Gastrocnemius medialis (tissue), 4 donors: ENCODE measurements at regions of chr9 and their contacts with region 1.

Region 1: DNA sequence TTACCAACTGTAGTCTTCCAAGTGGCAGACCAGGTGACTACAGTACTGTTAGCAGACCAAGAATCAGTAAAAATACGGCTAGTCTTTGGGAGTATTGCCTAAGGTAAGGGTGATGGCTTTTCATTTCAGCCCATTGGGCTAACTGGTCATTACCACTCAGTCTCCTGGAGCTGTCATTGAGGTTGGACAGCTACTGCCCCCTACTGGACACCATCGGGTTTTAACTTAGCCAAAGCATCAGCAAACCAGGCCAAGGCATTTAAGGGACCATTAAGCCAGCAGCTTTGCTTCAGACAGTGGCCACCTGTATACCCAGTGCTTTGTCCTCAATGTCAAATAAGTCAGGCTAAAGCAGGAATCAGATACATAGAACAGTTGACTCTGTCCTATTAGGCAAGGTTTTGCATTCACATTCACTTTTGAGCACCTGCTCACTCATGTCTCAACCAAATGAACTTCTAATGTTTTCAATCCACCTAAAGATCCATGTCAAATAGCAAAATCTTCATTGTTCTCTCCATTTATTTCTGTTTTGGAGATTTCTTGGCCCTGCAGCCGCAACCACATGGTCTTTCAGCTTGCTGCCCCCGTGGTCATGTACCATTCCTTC is 117.2 kb downstream of the INVS start:
- DNase-seq: peak in 1 of 2 donors; percentile 28
- ATAC-seq: peak in 1 of 2 donors; percentile 53
- H3K4me3 ChIP-seq: no peak overlapping the region
- H3K27ac ChIP-seq: no peak overlapping the region
- H3K4me1 ChIP-seq: peaks cover 0 to 4% of the 10 kb centered on the region in 2 donors
- H3K27me3 ChIP-seq: no peaks in the 10 kb centered on the region
- CTCF ChIP-seq: peak; percentile 40 to 70 (median 52)
- POLR2A ChIP-seq: no peak

Region 2: GRCh38 chr9:99173570-99174504 is 1042.4 kb before region 1 on chr9:
- in situ Hi-C with region 1: loop called in 1 of 4 experiments (anchors 25 kb)
- intact Hi-C with region 1: loop called (anchors 10 kb)
- DNase-seq: no peak
- ATAC-seq: no peak
- H3K4me3 ChIP-seq: no peak overlapping the region
- H3K27ac ChIP-seq: no peak overlapping the region
- H3K4me1 ChIP-seq: no peaks in the 10 kb centered on the region
- H3K27me3 ChIP-seq: peaks cover 0 to 4% (median 0%) of the 10 kb centered on the region in 3 donors
- CTCF ChIP-seq: no peak
- POLR2A ChIP-seq: no peak

Region 3: DNA sequence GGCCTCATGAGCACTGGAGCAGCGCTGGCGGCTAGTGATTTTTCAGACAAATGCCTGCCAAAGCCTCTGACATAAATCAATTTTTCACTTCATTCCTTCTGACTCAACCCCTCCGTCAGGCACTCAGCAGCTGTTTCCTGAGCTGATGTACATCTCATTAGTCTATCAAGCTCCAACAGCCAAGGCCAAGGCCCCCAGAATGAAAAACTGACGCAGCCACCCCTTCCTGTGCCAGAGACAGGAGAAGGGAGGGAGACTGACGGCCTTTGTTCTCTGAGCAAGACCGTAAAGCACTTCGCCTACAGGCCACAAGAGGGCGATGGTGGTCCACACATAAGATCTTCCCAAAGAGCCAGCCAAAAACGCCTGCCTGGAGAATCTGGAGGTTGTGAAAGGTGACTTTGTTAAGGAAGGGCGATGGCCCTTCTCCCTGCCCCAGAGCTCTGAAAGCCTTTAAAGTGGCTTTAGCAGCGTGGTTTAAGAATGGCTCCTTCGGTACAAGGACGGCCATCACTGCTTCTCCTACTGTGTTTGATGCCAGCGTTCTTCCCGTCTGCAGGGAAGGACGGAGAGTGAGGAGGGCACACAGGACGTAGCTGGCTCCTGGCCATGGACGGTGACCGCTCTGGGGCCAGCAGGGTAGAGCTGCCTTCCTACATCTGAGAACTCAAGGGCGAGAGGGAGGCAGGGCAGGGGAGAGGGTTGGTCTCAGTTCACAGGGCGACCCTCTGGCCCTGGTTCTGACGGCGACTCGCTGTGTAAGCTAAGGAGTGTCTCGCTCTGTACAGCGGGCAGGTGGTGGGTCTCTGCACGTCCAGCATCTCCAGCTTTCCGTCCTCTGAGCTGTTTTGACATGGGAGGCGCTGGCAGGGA is 1031.6 kb before region 1 on chr9:
- in situ Hi-C with region 1: loop called in 1 of 4 experiments (anchors 25 kb)
- intact Hi-C with region 1: loop called (anchors 10 kb)
- DNase-seq: peak; percentile 70 to 86
- ATAC-seq: peak; percentile 94 to 97
- H3K4me3 ChIP-seq: peak overlapping the region; percentile 3 to 48 (median 40)
- H3K27ac ChIP-seq: peak overlapping the region in 2 of 4 donors; percentile 12 to 30
- H3K4me1 ChIP-seq: peaks cover 0 to 7% of the 10 kb centered on the region in 2 donors
- H3K27me3 ChIP-seq: no peaks in the 10 kb centered on the region
- CTCF ChIP-seq: peak; percentile 90 to 97 (median 92)
- POLR2A ChIP-seq: no peak

Region 4: DNA sequence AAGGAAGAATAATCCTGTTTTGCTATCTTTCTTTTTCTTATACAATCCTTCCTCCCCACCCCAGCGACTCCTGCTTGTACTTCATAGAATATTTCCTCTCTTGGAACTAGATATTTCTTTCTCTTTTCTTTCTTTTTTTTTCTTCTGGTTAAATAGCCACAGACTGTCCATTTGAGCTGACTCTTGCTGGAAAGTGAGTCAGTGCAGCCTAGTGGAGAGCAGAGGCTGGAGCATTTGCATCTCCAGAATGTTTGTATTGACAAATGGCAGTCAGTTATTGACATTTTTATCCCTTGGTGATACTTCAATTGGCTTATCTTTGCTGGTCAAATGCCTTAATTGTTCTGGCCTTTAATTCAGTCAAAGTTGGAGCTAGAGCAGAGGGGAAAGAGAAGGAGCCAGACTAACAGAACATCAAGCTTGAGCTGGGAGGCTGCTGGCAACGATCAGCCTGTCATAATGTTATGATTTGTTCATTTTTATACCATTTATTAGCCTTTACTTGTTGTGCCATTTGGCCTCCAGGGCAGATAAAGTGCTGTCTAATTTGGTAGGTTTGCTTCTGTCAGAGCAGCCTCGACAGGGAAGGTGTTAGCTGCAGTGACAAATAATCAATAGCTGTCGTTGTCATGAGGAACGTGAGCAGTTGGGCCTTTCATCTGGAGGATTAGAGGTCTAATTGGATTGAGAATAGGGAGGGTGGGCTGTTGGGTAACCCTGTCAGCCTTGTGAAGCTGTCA is 48.2 kb before region 1 on chr9:
- in situ Hi-C with region 1: no loop called
- intact Hi-C with region 1: no loop called
- DNase-seq: no peak
- ATAC-seq: no peak
- H3K4me3 ChIP-seq: no peak overlapping the region
- H3K27ac ChIP-seq: no peak overlapping the region
- H3K4me1 ChIP-seq: no peaks in the 10 kb centered on the region
- H3K27me3 ChIP-seq: no peaks in the 10 kb centered on the region
- CTCF ChIP-seq: no peak
- POLR2A ChIP-seq: no peak

Region 5: GRCh38 chr9:100277166-100277979 is 61.1 kb after region 1 on chr9:
- in situ Hi-C with region 1: no loop called
- intact Hi-C with region 1: no loop called
- DNase-seq: no peak
- ATAC-seq: no peak
- H3K4me3 ChIP-seq: no peak overlapping the region
- H3K27ac ChIP-seq: no peak overlapping the region
- H3K4me1 ChIP-seq: no peaks in the 10 kb centered on the region
- H3K27me3 ChIP-seq: no peaks in the 10 kb centered on the region
- CTCF ChIP-seq: no peak
- POLR2A ChIP-seq: no peak

Region 6: DNA sequence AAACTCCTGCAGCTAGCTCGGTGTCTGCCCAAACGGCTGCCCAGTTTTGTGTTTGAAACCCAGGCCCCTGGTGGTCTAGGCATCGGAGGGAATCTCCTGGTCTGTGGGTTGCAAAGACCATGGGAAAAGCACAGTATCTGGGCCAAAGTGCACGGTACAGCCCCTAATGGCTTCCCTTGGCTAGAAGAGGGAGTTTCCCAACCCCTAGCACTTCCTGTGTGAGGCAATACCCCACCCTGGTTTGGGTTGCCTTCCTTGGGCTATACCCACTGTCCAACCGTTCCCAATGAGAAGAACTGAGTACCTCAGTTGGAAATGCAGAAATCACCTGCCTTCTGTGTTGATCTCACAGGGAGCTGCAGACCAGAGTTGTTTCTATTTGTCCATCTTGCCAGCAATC is 403.4 kb after region 1 on chr9:
- in situ Hi-C with region 1: no loop called
- intact Hi-C with region 1: no loop called
- DNase-seq: no peak
- ATAC-seq: no peak
- H3K4me3 ChIP-seq: no peak overlapping the region
- H3K27ac ChIP-seq: no peak overlapping the region
- H3K4me1 ChIP-seq: no peaks in the 10 kb centered on the region
- H3K27me3 ChIP-seq: no peaks in the 10 kb centered on the region
- CTCF ChIP-seq: no peak
- POLR2A ChIP-seq: no peak